ENCODE measurements at regions of chr22 and their contacts with region 1.

Region 1: DNA sequence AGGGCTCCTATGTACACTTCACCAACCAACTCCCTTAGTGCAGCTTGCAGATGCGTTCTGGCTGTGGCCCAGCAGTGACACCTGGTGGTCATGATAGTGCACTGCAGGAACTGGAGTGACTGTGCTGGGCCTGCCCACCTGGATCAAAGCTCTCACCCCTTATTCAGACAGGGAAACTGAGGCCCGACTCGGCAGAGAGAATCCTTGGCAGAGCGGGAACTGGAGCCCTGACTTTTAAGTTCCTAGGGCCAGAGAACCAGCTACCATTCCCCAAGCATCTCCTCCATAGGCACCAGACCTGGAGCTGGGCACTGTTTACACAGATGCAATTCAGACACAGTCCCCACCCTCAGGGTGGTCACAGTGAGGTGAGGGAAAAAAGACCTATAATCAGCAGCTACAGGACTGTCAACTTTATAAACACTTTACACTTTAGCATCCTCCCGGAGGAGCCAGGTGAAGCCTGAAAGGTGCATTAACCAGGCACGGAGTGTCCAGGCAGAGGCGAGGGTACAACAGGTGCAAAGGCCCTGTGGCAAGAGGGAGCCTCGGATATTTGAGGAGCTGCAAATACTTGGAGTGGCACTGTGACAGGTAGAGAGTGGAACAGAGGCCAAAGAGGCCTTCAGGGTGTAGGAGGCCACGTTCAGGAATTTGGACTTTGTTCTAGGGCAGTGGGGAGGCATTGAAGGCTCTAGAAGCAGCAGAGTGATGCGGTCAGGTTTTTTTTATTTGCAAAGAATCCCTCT is 22.0 kb downstream of the RHBDD3 start:
- DNase-seq: peak in 1 of 2 experiments; percentile 89
- H3K4me3 ChIP-seq: no peak overlapping the region
- H3K27ac ChIP-seq: no peak overlapping the region
- H3K4me1 ChIP-seq: no peaks in the 10 kb centered on the region
- H3K27me3 ChIP-seq: no peaks in the 10 kb centered on the region
- CTCF ChIP-seq: peak; percentile 96 to 100 (median 98)
- EP300 ChIP-seq: no peak
- POLR2A ChIP-seq: no peak
- RAD21 ChIP-seq: peak; percentile 99

Region 2: DNA sequence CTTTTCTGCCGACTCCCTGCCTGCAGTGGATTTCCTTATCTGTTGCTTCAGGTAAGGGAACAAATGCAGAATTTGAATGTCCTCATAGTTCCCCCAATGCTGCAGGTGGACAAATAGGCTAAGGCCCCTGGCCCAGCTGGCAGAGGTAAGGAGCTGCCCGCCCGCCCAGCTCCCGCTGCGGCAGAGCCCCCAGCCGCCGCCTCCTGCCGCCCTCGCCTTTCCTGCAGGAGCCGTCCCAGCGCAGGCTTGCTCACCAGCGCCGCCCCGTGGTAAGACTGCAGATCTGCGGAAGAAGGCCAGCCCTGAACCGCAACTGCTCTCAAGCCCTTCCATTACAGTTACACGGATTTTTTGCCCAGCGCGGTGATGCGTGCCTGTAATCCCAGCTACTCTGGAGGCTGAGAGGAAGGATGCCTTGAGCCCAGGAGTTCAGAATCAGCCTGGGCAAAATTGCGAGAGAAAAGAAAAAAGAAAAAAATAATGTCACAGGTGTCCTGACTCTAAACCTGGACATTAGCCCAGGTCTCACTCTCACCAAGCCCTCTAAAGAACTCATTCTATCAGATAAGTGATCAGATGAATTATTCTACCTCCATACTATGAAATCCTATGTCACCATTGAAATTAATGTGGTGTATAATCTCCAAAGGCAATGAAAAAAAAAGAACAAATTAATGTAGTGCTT is 91.3 kb before region 1 on chr22:
- CTCF ChIA-PET with region 1: interaction called, 22 read pairs
- POLR2A ChIA-PET with region 1: interaction called, 4 read pairs
- DNase-seq: peak; percentile 39 to 95
- H3K4me3 ChIP-seq: no peak overlapping the region
- H3K27ac ChIP-seq: no peak overlapping the region
- H3K4me1 ChIP-seq: peaks cover 7 to 22% (median 10%) of the 10 kb centered on the region in 4 experiments; a peak in 6 of 7 replicates
- H3K27me3 ChIP-seq: no peaks in the 10 kb centered on the region
- CTCF ChIP-seq: peak; percentile 96 to 97 (median 96)
- EP300 ChIP-seq: no peak
- POLR2A ChIP-seq: no peak
- RAD21 ChIP-seq: peak; percentile 91 to 95

Region 3: GRCh38 chr22:29202212-29203192 is 43.3 kb before region 1 on chr22:
- CTCF ChIA-PET with region 1: interaction called, 84 read pairs
- POLR2A ChIA-PET with region 1: interaction called, 3 read pairs
- DNase-seq: no peak
- H3K4me3 ChIP-seq: no peak overlapping the region; a peak in 1 of 8 replicates
- H3K27ac ChIP-seq: no peak overlapping the region
- H3K4me1 ChIP-seq: peaks cover 0 to 13% (median 6%) of the 10 kb centered on the region in 4 experiments; a peak in 5 of 7 replicates
- H3K27me3 ChIP-seq: peaks cover 0 to 12% (median 3%) of the 10 kb centered on the region in 4 experiments; a peak in 5 of 7 replicates
- CTCF ChIP-seq: peak; percentile 65 to 80 (median 74)
- EP300 ChIP-seq: no peak
- POLR2A ChIP-seq: no peak
- RAD21 ChIP-seq: peak; percentile 73 to 77

Region 4: DNA sequence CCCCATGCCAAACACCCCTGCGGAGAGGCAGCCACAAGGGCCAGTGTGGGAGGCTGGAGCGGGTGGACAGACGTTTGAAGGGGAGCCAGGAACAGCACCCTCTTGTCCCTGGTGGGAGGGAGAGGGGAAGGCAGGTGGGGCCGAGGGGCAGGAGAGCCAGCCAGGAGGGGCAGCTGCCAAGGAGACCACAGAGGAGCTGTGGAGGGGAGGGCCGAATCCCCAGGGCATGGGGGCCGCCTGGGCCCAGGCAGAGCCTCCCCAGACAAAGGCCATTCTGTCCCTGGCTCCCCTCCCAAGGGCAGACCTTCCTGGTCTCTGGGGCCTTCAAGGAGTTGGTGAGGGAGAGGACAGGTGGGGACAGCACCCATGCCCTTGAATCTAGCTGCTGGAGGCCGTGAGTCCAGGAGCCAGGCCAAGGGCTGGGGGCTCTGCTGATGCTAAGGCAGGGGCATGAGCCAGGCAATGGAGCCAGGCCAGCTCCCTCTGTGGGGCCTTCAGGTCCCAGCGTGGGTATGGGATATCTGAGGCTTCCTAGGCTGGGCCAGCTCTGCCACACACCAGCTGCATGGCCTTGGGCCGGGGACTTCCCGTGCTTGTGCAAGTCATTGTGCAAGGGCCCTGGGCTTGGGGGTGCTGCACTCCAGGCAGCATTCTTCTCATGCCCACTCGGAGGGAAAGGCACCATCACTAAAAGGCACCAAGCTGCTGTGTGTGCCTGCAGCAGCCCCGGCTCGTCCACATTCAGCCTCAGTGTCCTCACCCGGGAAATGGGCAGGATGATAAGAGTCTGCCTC is 28.7 kb before region 1 on chr22:
- CTCF ChIA-PET with region 1: interaction called, 28 read pairs
- POLR2A ChIA-PET with region 1: no interaction called
- DNase-seq: no peak
- H3K4me3 ChIP-seq: no peak overlapping the region
- H3K27ac ChIP-seq: no peak overlapping the region
- H3K4me1 ChIP-seq: peaks cover 0 to 15% (median 8%) of the 10 kb centered on the region in 4 experiments; a peak in 6 of 7 replicates
- H3K27me3 ChIP-seq: no peaks in the 10 kb centered on the region
- CTCF ChIP-seq: no peak
- EP300 ChIP-seq: no peak
- POLR2A ChIP-seq: no peak
- RAD21 ChIP-seq: no peak

Region 5: GRCh38 chr22:29231971-29232959 is 13.5 kb before region 1 on chr22:
- CTCF ChIA-PET with region 1: interaction called, 39 read pairs
- POLR2A ChIA-PET with region 1: no interaction called
- DNase-seq: no peak
- H3K4me3 ChIP-seq: no peak overlapping the region
- H3K27ac ChIP-seq: no peak overlapping the region
- H3K4me1 ChIP-seq: no peaks in the 10 kb centered on the region; a peak in 1 of 7 replicates
- H3K27me3 ChIP-seq: no peaks in the 10 kb centered on the region
- CTCF ChIP-seq: no peak
- EP300 ChIP-seq: no peak
- POLR2A ChIP-seq: no peak
- RAD21 ChIP-seq: no peak

Region 6: DNA sequence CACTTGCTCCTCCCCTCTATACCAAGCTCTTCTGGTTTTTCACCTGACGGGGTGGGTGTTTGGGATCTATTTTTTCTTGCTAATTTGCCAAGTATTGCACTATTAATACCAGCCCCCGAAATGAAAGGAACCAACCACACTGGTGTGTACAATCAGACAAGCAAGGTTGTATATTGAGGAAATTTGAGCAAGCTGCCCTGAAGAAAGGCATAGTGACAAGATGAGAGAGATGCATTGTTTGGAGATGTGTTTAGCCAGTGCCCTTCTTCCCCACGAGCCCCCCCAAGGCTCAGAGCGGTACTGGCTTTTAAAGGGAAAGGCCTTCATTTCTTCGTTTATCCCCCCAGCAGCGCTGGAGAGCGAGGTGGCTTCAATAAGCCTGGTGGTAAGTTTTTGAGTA is 45.4 kb after region 1 on chr22:
- CTCF ChIA-PET with region 1: no interaction called
- POLR2A ChIA-PET with region 1: no interaction called
- DNase-seq: no peak
- H3K4me3 ChIP-seq: no peak overlapping the region
- H3K27ac ChIP-seq: no peak overlapping the region
- H3K4me1 ChIP-seq: no peaks in the 10 kb centered on the region
- H3K27me3 ChIP-seq: no peaks in the 10 kb centered on the region
- CTCF ChIP-seq: no peak
- EP300 ChIP-seq: no peak
- POLR2A ChIP-seq: no peak
- RAD21 ChIP-seq: no peak

Measured in H1 (cell line).